ENCODE measurements at regions of chr10 and their contacts with region 1.

Region 1: GRCh38 chr10:27558612-27559020 is 54.5 kb downstream of the RAB18 start:
- DNase-seq: peak; percentile 40
- H3K4me3 ChIP-seq: no peak overlapping the region
- H3K27ac ChIP-seq: no peak overlapping the region
- H3K4me1 ChIP-seq: no peaks in the 10 kb centered on the region
- H3K27me3 ChIP-seq: no peaks in the 10 kb centered on the region
- CTCF ChIP-seq: peak; percentile 74 to 77

Region 2: DNA sequence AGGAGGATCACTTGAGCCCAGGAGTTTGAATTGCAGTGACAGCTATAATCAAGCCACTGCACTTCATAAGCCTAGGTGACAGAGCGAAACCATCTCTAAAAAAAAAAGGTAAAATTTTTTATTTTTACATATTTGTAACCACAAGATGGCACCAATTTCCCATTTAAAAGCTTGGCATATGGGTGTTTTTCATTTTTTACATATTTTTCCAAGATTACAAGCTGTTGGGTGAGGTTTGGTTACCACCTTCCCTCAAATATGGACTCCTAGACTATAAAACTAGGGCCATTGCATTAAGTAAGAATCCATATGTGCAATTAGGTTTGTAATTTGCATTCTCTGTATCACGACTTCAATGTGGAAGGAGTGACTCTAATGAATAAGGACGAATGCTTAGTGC is 188.7 kb before region 1 on chr10:
- CTCF ChIA-PET with region 1: no interaction called
- dilution Hi-C with region 1: no loop called
- in situ Hi-C with region 1: no loop called
- intact Hi-C with region 1: loop called (anchors 1 kb)
- DNase-seq: no peak
- H3K4me3 ChIP-seq: no peak overlapping the region
- H3K27ac ChIP-seq: no peak overlapping the region
- H3K4me1 ChIP-seq: no peaks in the 10 kb centered on the region
- H3K27me3 ChIP-seq: no peaks in the 10 kb centered on the region
- CTCF ChIP-seq: peak; percentile 23 to 36

Region 3: DNA sequence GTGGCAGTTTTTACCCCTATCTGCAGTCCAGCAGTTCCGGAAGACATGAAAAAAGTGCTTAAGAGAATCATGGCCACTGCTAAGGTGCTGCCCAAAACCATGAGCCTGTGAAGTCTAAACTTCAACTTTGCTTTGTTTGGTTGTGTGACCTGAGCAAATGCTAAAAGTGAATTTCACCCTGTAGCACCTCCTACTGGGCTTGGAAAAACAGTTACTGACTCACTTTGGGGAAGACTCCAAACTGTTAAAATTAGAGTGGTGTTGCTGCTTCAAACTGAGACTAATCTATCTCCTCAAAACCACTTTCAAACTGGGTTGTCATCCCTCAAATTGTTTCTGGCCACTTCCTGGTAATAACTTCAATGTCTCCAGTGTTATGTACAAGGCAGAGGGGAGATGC is 165.7 kb after region 1 on chr10:
- CTCF ChIA-PET with region 1: no interaction called
- dilution Hi-C with region 1: no loop called
- in situ Hi-C with region 1: no loop called
- intact Hi-C with region 1: loop called (anchors 2 kb)
- DNase-seq: no peak
- H3K4me3 ChIP-seq: no peak overlapping the region
- H3K27ac ChIP-seq: no peak overlapping the region
- H3K4me1 ChIP-seq: no peaks in the 10 kb centered on the region
- H3K27me3 ChIP-seq: peaks cover 4% of the 10 kb centered on the region
- CTCF ChIP-seq: peak; percentile 28 to 30

Region 4: GRCh38 chr10:27794157-27794556 is 235.5 kb after region 1 on chr10:
- CTCF ChIA-PET with region 1: no interaction called
- dilution Hi-C with region 1: no loop called
- in situ Hi-C with region 1: no loop called
- intact Hi-C with region 1: loop called (anchors 1 kb)
- DNase-seq: no peak
- H3K4me3 ChIP-seq: no peak overlapping the region
- H3K27ac ChIP-seq: no peak overlapping the region
- H3K4me1 ChIP-seq: no peaks in the 10 kb centered on the region
- H3K27me3 ChIP-seq: no peaks in the 10 kb centered on the region
- CTCF ChIP-seq: peak; percentile 8 to 31

Region 5: DNA sequence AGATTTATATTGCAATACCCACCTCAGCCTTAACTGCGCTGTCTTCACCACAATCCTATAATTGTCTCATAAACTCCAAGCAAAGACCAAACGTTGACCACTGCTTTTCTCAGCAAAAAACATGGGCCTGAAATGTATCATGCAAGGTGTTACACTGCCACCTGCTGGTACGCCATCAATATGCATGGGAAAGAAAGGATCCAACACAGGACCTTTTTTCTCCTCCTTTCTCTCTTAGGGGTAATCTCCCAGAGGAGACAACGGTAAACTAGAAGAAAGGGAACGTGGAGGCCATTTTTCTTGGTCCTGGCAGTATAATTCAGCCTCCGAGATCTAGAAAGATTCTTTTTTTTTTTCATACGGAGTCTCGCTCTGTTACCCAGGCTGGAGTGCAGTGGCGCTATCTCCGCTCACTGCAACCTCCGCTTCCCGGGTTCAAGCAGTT is 823.3 kb after region 1 on chr10:
- CTCF ChIA-PET with region 1: no interaction called
- dilution Hi-C with region 1: no loop called
- in situ Hi-C with region 1: loop called in 1 of 2 experiments (anchors 25 kb)
- intact Hi-C with region 1: loop called (anchors 10 kb)
- DNase-seq: peak; percentile 83
- H3K4me3 ChIP-seq: no peak overlapping the region
- H3K27ac ChIP-seq: no peak overlapping the region
- H3K4me1 ChIP-seq: peaks cover under 1% of the 10 kb centered on the region
- H3K27me3 ChIP-seq: no peaks in the 10 kb centered on the region
- CTCF ChIP-seq: peak; percentile 90 to 93